Endothelial cell of umbilical vein (primary cell): ENCODE measurements at regions of chr17 and their contacts with region 1.

Region 1: DNA sequence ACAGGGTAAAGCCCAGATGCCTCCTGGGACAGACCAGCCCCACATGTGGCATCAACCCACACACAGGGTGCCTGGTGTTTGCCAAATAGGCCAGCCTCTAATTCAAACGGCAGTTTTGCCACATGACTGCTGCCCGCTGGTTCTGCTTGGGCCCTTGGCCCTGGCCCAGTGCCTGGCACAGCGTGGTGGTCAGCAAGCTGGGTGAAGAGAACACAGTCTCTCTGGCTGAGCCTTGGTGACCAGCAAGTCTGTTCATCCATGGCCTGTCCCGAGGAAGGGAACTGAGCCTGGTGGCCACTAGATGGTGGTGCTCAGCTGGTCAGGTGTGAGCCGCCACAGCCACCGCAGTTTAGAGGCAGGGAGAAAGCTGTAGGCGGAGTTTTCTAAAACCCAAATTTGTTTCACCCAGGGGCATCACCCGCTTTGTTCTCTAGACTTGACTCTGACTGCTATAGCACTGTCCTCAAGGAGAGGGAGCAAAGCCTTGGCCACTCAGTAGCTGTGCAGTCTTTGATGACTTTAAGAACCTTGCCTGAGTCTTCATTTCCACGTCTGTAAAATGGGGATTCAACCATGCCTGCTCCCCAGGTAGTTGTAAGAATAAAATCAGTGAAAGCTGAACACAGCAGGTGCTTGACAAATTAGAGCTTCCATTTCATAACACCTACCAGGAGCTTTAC is 4.7 kb upstream of the GFAP start:
- DNase-seq: peak; percentile 76
- H3K4me3 ChIP-seq: no peak overlapping the region
- H3K27ac ChIP-seq: no peak overlapping the region
- H3K4me1 ChIP-seq: peaks cover 8% of the 10 kb centered on the region
- H3K27me3 ChIP-seq: peaks cover 0 to 11% of the 10 kb centered on the region in 2 experiments
- CTCF ChIP-seq: peak; percentile 75 to 84
- POLR2A ChIP-seq: no peak

Region 2: DNA sequence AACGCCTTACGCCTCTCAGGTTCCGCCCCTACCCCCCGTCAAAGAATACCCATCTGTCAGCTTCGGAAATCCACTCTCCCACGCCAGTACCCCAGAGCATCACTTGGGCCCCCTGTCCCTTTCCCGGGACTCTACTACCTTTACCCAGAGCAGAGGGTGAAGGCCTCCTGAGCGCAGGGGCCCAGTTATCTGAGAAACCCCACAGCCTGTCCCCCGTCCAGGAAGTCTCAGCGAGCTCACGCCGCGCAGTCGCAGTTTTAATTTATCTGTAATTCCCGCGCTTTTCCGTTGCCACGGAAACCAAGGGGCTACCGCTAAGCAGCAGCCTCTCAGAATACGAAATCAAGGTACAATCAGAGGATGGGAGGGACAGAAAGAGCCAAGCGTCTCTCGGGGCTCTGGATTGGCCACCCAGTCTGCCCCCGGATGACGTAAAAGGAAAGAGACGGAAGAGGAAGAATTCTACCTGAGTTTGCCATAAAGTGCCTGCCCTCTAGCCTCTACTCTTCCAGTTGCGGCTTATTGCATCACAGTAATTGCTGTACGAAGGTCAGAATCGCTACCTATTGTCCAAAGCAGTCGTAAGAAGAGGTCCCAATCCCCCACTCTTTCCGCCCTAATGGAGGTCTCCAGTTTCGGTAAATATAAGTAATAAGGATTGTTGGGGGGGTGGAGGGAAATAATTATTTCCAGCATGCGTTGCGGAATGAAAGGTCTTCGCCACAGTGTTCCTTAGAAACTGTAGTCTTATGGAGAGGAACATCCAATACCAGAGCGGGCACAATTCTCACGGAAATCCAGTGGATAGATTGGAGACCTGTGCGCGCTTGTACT is 1794.7 kb before region 1 on chr17 and contains the start of gene BRCA1:
- CTCF ChIA-PET with region 1: no interaction called
- POLR2A ChIA-PET with region 1: no interaction called
- dilution Hi-C with region 1: no loop called
- intact Hi-C with region 1: no loop called
- DNase-seq: peak; percentile 98
- H3K4me3 ChIP-seq: peak within 1 kb of the TSS; percentile 64 to 92 (median 86)
- H3K27ac ChIP-seq: peak within 1 kb of the TSS; percentile 67
- H3K4me1 ChIP-seq: peaks cover 14% of the 10 kb centered on the region
- H3K27me3 ChIP-seq: no peaks in the 10 kb centered on the region
- CTCF ChIP-seq: no peak
- POLR2A ChIP-seq: peak; percentile 69
- total RNA-seq, gene BRCA1: 25.7 and 29.0 TPM in 2 replicates

Region 3: GRCh38 chr17:44854192-44854591 is 65.8 kb before region 1 on chr17:
- CTCF ChIA-PET with region 1: no interaction called
- POLR2A ChIA-PET with region 1: no interaction called
- dilution Hi-C with region 1: no loop called
- intact Hi-C with region 1: no loop called
- DNase-seq: no peak
- H3K4me3 ChIP-seq: no peak overlapping the region
- H3K27ac ChIP-seq: no peak overlapping the region
- H3K4me1 ChIP-seq: no peaks in the 10 kb centered on the region
- H3K27me3 ChIP-seq: no peaks in the 10 kb centered on the region
- CTCF ChIP-seq: no peak
- POLR2A ChIP-seq: no peak

Region 4: DNA sequence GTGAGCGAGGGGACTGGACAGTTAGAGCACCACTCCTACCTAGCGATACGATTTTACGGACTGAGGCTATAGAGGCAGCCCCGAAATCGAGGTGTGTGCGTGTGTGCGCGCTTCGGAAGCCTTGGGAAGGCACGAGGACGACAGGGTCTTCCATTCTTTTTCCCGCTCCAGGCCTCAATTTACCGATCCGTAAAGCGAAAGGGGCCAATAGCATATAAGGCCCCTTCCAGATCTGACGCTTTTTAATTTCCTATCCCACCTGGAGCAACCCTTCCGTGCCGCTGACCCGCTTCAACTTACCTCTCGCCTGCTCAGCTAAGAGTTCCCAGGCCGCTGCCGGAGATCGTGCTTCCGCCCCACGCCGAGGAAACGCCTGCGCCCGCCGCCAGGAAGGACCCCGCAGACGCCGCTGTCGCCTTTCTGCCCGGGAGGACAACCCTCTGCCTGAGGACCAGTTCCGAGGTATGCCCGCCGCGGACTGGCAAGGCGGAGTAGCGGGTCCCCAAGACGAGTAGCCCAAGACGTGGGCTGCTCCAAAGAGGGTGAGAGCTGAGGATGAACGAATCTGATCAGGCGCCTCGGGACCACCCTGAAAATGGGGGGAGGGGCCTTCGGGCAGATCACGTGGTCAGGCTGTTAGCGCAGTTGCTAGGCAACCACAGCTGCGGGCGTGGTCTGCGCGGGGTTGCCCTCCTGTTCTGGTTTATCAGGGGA is 20.8 kb before region 1 on chr17 and contains the start of gene EFTUD2:
- CTCF ChIA-PET with region 1: interaction called, 94 read pairs
- POLR2A ChIA-PET with region 1: no interaction called
- dilution Hi-C with region 1: no loop called
- intact Hi-C with region 1: loop called (anchors 1 kb)
- DNase-seq: peak; percentile 93
- H3K4me3 ChIP-seq: peak within 1 kb of the TSS; percentile 67 to 97 (median 73)
- H3K27ac ChIP-seq: peak within 1 kb of the TSS; percentile 96
- H3K4me1 ChIP-seq: peaks cover 37% of the 10 kb centered on the region
- H3K27me3 ChIP-seq: no peaks in the 10 kb centered on the region
- CTCF ChIP-seq: no peak
- POLR2A ChIP-seq: peak; percentile 87
- total RNA-seq, gene EFTUD2: 170 and 171 TPM in 2 replicates

Region 5: GRCh38 chr17:44941712-44942331 is 21.8 kb after region 1 on chr17:
- CTCF ChIA-PET with region 1: interaction called, 13 read pairs
- POLR2A ChIA-PET with region 1: no interaction called
- dilution Hi-C with region 1: no loop called
- intact Hi-C with region 1: no loop called
- DNase-seq: no peak
- H3K4me3 ChIP-seq: no peak overlapping the region
- H3K27ac ChIP-seq: no peak overlapping the region
- H3K4me1 ChIP-seq: peaks cover 5% of the 10 kb centered on the region
- H3K27me3 ChIP-seq: no peaks in the 10 kb centered on the region
- CTCF ChIP-seq: no peak
- POLR2A ChIP-seq: no peak

Region 6: DNA sequence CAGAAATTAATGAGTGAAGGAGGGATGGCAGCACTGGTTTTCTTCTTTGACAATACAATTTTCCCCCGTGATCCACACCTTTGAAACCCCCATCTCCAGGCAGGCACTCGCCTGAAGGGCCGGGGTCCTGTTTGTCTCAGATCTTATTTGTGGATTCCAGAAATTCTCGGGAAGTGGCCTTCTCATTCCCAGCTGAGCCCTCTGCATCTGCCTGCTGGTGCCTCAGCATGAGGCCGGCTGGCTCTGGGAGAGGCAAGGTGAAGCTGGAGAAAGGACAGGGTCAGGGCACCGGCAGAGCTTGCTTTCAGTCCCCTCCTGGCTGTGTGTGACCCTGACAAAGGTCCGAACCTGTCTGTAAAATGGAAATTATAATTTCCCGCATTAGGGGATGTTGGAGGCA is 83.9 kb after region 1 on chr17:
- CTCF ChIA-PET with region 1: interaction called, 12 read pairs
- POLR2A ChIA-PET with region 1: no interaction called
- dilution Hi-C with region 1: no loop called
- intact Hi-C with region 1: no loop called
- DNase-seq: no peak
- H3K4me3 ChIP-seq: no peak overlapping the region
- H3K27ac ChIP-seq: no peak overlapping the region
- H3K4me1 ChIP-seq: no peaks in the 10 kb centered on the region
- H3K27me3 ChIP-seq: peaks cover 10 to 16% of the 10 kb centered on the region in 2 experiments
- CTCF ChIP-seq: no peak
- POLR2A ChIP-seq: no peak

Region 7: GRCh38 chr17:45081042-45081703 is 161.1 kb after region 1 on chr17:
- CTCF ChIA-PET with region 1: no interaction called
- POLR2A ChIA-PET with region 1: no interaction called
- dilution Hi-C with region 1: no loop called
- intact Hi-C with region 1: no loop called
- DNase-seq: no peak
- H3K4me3 ChIP-seq: no peak overlapping the region
- H3K27ac ChIP-seq: no peak overlapping the region
- H3K4me1 ChIP-seq: peaks cover 2% of the 10 kb centered on the region
- H3K27me3 ChIP-seq: no peaks in the 10 kb centered on the region
- CTCF ChIP-seq: no peak
- POLR2A ChIP-seq: no peak

Region 8: GRCh38 chr17:45098869-45099616 is 179.0 kb after region 1 on chr17:
- CTCF ChIA-PET with region 1: interaction called, 13 read pairs
- POLR2A ChIA-PET with region 1: no interaction called
- dilution Hi-C with region 1: no loop called
- intact Hi-C with region 1: loop called (anchors 1 kb)
- DNase-seq: peak; percentile 73
- H3K4me3 ChIP-seq: no peak overlapping the region
- H3K27ac ChIP-seq: no peak overlapping the region
- H3K4me1 ChIP-seq: peaks cover under 1% of the 10 kb centered on the region
- H3K27me3 ChIP-seq: no peaks in the 10 kb centered on the region
- CTCF ChIP-seq: peak; percentile 84 to 91
- POLR2A ChIP-seq: no peak